Calu3 (cell line): ENCODE measurements at regions of chr7 and their contacts with region 1.

Region 1: GRCh38 chr7:123534383-123535260 is at the start of gene IQUB:
- DNase-seq: peak; percentile 97
- H3K4me3 Mint-ChIP-seq: peak within 1 kb of the TSS; percentile 90
- H3K27ac Mint-ChIP-seq: peak within 1 kb of the TSS; percentile 99
- H3K4me1 Mint-ChIP-seq: peaks cover 8% of the 10 kb centered on the region
- H3K27me3 Mint-ChIP-seq: peaks cover 27% of the 10 kb centered on the region
- CTCF ChIP-seq: no peak
- total RNA-seq, gene IQUB: 0.21 and 0.42 TPM in 2 replicates

Region 2: GRCh38 chr7:123494193-123494796 is 40.3 kb before region 1 on chr7:
- CTCF ChIA-PET with region 1: interaction called, 10 read pairs
- intact Hi-C with region 1: loop called (anchors 1 kb)
- DNase-seq: peak; percentile 10
- H3K4me3 Mint-ChIP-seq: no peak overlapping the region
- H3K27ac Mint-ChIP-seq: no peak overlapping the region
- H3K4me1 Mint-ChIP-seq: no peaks in the 10 kb centered on the region
- H3K27me3 Mint-ChIP-seq: peaks cover 19% of the 10 kb centered on the region
- CTCF ChIP-seq: peak; percentile 23

Region 3: GRCh38 chr7:123635551-123636359 is 101.1 kb after region 1 on chr7:
- CTCF ChIA-PET with region 1: no interaction called
- intact Hi-C with region 1: no loop called
- DNase-seq: no peak
- H3K4me3 Mint-ChIP-seq: no peak overlapping the region
- H3K27ac Mint-ChIP-seq: no peak overlapping the region
- H3K4me1 Mint-ChIP-seq: peaks cover 8% of the 10 kb centered on the region
- H3K27me3 Mint-ChIP-seq: no peaks in the 10 kb centered on the region
- CTCF ChIP-seq: peak; percentile 35

Region 4: DNA sequence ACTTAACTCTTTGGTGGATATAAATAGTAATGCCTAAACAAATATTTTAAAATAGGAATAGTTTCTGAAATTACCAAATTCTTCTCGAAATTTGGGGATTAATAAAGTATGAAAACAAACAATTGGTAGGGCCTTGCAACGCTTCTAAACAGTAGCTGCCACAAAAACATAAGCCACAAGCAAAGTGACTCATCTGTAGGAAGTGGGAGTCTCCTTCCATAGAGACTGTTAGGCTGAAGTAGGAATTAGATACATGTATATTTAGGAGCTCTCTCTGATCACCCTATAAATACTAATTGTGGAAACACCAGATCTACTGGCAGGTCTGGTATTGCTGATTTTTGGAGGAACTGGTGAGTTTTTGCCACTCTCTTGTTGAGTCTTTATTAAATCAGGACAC is 115.3 kb after region 1 on chr7:
- CTCF ChIA-PET with region 1: no interaction called
- intact Hi-C with region 1: no loop called
- DNase-seq: no peak
- H3K4me3 Mint-ChIP-seq: no peak overlapping the region
- H3K27ac Mint-ChIP-seq: no peak overlapping the region
- H3K4me1 Mint-ChIP-seq: no peaks in the 10 kb centered on the region
- H3K27me3 Mint-ChIP-seq: no peaks in the 10 kb centered on the region
- CTCF ChIP-seq: no peak